ENCODE measurements at regions of chr12 and their contacts with region 1.

Region 1: DNA sequence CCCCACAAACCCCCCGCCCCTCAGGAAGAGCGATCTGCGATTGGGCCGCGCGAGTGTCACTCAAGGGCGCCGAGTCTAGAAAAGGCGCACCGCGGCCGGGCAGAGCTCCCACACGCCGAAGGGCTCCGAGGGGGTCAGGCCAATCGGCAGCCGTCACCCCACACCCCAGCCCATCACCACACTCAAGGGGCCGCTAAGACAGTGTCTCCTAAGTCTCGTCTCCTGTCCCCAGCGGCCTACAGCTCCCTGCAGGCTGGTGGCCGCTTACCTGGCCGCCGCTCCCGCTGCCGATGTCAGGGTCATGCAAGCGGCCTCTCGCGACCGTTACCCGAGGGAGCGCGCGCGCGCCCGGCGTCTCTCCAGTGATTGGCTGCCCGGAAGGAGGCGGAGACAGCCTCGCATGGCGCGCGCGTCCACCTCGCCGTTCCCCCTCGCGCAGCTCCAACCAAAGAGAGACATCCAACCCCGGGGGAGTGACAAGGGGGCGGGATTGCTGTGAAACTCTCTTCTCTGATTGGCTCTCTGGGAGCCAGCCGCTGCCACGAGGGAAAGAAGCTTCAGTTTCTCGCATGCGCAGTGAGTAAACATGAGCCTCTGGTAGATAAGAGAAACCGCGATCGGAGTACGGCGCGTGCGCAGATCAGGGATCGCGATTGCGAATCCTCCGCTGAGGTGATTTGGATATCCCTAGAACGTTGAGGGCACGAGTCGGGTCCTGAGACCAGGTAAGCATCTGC is at the starts of genes MPHOSPH9 and MTRFR:
- DNase-seq: peak; percentile 94 to 100 (median 100)
- ATAC-seq: peak; percentile 97
- H3K4me3 ChIP-seq: peak within 1 kb of the TSS; percentile 97
- H3K4me3 Mint-ChIP-seq: peak within 1 kb of the TSS; percentile 93 to 100 (median 98)
- H3K27ac ChIP-seq: peak within 1 kb of the TSS; percentile 95
- H3K27ac Mint-ChIP-seq: peak within 1 kb of the TSS; percentile 96 to 99 (median 99)
- H3K4me1 ChIP-seq: peaks cover 31 to 41% of the 10 kb centered on the region in 2 donors
- H3K4me1 Mint-ChIP-seq: peaks cover 43 to 88% (median 65%) of the 10 kb centered on the region in 7 donors
- H3K27me3 ChIP-seq: no peaks in the 10 kb centered on the region
- H3K27me3 Mint-ChIP-seq: peaks cover 0 to 4% (median 0%) of the 10 kb centered on the region in 5 donors
- total RNA-seq, gene MPHOSPH9: 71.0 to 102 (median 82.4) TPM
- total RNA-seq, gene MTRFR: 26.8 to 56.9 (median 39.5) TPM

Region 2: GRCh38 chr12:122752464-122753318 is 480.3 kb before region 1 on chr12 and contains the start of gene DENR:
- CTCF ChIA-PET with region 1: no interaction called
- POLR2A ChIA-PET with region 1: no interaction called
- intact Hi-C with region 1: loop called in 1 of 2 experiments (anchors 1 kb)
- DNase-seq: peak; percentile 98 to 100 (median 99)
- ATAC-seq: peak; percentile 99
- H3K4me3 ChIP-seq: peak within 1 kb of the TSS; percentile 87
- H3K4me3 Mint-ChIP-seq: peak within 1 kb of the TSS; percentile 93 to 100 (median 96)
- H3K27ac ChIP-seq: peak within 1 kb of the TSS; percentile 94
- H3K27ac Mint-ChIP-seq: peak within 1 kb of the TSS; percentile 89 to 98 (median 96)
- H3K4me1 ChIP-seq: peaks cover 12 to 19% of the 10 kb centered on the region in 2 donors
- H3K4me1 Mint-ChIP-seq: peaks cover 31 to 70% (median 60%) of the 10 kb centered on the region in 7 donors
- H3K27me3 ChIP-seq: no peaks in the 10 kb centered on the region
- H3K27me3 Mint-ChIP-seq: no peaks in the 10 kb centered on the region
- total RNA-seq, gene DENR: 29.5 to 65.5 (median 46.1) TPM

Region 3: DNA sequence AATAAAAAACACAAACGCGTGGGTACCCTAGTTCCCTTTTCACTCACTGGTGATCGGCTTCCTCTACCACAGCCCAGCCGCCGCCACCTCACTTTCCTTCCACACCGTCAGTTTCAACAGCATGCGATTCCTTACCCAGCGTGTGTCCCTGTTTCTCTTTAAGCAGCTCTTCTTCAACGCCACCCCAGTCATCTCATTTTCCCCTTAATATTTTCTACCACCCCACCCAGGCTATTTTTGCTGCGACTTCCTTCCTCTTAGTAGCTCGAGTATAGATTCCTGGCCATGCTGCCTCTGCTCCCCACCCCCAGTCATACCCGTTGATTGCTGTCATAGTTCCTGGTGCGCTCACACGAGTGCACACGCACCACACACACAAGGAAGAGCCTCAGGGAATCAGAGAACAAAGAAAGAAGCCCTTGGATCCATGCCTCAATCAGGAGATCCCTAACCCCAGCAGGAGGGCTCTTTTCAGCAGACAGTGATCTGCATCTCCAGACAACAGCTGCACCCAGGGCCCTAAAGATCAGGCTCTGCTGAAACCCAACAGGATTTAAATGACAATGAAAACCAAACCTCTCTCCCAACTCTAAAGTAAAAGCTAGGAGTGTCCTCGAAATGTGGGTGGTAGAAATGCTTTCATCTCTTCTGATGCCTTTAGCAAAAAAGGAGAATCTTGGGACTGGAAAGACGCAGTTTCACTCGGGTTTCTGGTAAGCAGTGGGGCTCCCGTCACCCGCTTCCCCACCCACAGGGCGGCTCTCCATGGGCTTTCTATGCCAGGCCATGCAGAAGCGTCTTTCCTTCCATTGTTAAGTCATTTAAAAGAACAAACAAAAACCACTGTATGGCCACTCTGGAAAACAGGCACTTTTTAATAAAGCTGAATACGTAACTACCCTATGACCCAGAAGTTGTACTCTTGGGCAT is 360.9 kb before region 1 on chr12:
- CTCF ChIA-PET with region 1: no interaction called
- POLR2A ChIA-PET with region 1: interaction called, 10 read pairs
- intact Hi-C with region 1: no loop called
- DNase-seq: peak in 5 of 9 donors; percentile 40 to 71 (median 43)
- ATAC-seq: peak; percentile 61
- H3K4me3 ChIP-seq: peak overlapping the region; percentile 50
- H3K4me3 Mint-ChIP-seq: peak overlapping the region; percentile 82 to 96 (median 89)
- H3K27ac ChIP-seq: peak overlapping the region; percentile 64
- H3K27ac Mint-ChIP-seq: peak overlapping the region; percentile 78 to 97 (median 87)
- H3K4me1 ChIP-seq: peaks cover 31 to 51% of the 10 kb centered on the region in 2 donors
- H3K4me1 Mint-ChIP-seq: peaks cover 47 to 82% (median 68%) of the 10 kb centered on the region in 7 donors
- H3K27me3 ChIP-seq: no peaks in the 10 kb centered on the region
- H3K27me3 Mint-ChIP-seq: peaks cover 0 to 9% (median 0%) of the 10 kb centered on the region in 5 donors

Region 4: GRCh38 chr12:122974274-122974891 is 258.6 kb before region 1 on chr12:
- CTCF ChIA-PET with region 1: no interaction called
- POLR2A ChIA-PET with region 1: interaction called, 34 read pairs
- intact Hi-C with region 1: loop called (anchors 1 kb)
- DNase-seq: peak; percentile 92 to 98 (median 98)
- ATAC-seq: peak; percentile 92
- H3K4me3 ChIP-seq: peak overlapping the region; percentile 100
- H3K4me3 Mint-ChIP-seq: peak overlapping the region; percentile 92 to 99 (median 97)
- H3K27ac ChIP-seq: peak overlapping the region; percentile 98
- H3K27ac Mint-ChIP-seq: peak overlapping the region; percentile 99 to 100 (median 99)
- H3K4me1 ChIP-seq: peaks cover 18 to 23% of the 10 kb centered on the region in 2 donors
- H3K4me1 Mint-ChIP-seq: peaks cover 17 to 39% (median 30%) of the 10 kb centered on the region in 7 donors
- H3K27me3 ChIP-seq: no peaks in the 10 kb centered on the region
- H3K27me3 Mint-ChIP-seq: peaks cover 0 to 3% (median 0%) of the 10 kb centered on the region in 5 donors

Region 5: GRCh38 chr12:123115409-123116121 is 117.4 kb before region 1 on chr12:
- CTCF ChIA-PET with region 1: interaction called, 4 read pairs
- POLR2A ChIA-PET with region 1: interaction called, 58 read pairs
- intact Hi-C with region 1: no loop called
- DNase-seq: peak in 7 of 9 donors; percentile 54 to 79 (median 70)
- ATAC-seq: peak; percentile 78
- H3K4me3 ChIP-seq: no peak overlapping the region
- H3K4me3 Mint-ChIP-seq: peak overlapping the region; percentile 38 to 81 (median 74)
- H3K27ac ChIP-seq: peak overlapping the region; percentile 69
- H3K27ac Mint-ChIP-seq: peak overlapping the region; percentile 41 to 100 (median 95)
- H3K4me1 ChIP-seq: peaks cover 3 to 59% of the 10 kb centered on the region in 2 donors
- H3K4me1 Mint-ChIP-seq: peaks cover 40 to 92% (median 85%) of the 10 kb centered on the region in 7 donors
- H3K27me3 ChIP-seq: no peaks in the 10 kb centered on the region
- H3K27me3 Mint-ChIP-seq: no peaks in the 10 kb centered on the region

Region 6: GRCh38 chr12:123250484-123251383 is 17.8 kb after region 1 on chr12:
- CTCF ChIA-PET with region 1: interaction called, 7 read pairs
- POLR2A ChIA-PET with region 1: interaction called, 10 read pairs
- intact Hi-C with region 1: no loop called
- DNase-seq: no peak
- ATAC-seq: no peak
- H3K4me3 ChIP-seq: no peak overlapping the region
- H3K4me3 Mint-ChIP-seq: peak overlapping the region in 9 of 10 donors; percentile 12 to 61 (median 27)
- H3K27ac ChIP-seq: peak overlapping the region; percentile 51
- H3K27ac Mint-ChIP-seq: peak overlapping the region; percentile 8 to 89 (median 62)
- H3K4me1 ChIP-seq: peaks cover 6 to 18% of the 10 kb centered on the region in 2 donors
- H3K4me1 Mint-ChIP-seq: peaks cover 29 to 64% (median 49%) of the 10 kb centered on the region in 7 donors
- H3K27me3 ChIP-seq: no peaks in the 10 kb centered on the region
- H3K27me3 Mint-ChIP-seq: no peaks in the 10 kb centered on the region

Region 7: DNA sequence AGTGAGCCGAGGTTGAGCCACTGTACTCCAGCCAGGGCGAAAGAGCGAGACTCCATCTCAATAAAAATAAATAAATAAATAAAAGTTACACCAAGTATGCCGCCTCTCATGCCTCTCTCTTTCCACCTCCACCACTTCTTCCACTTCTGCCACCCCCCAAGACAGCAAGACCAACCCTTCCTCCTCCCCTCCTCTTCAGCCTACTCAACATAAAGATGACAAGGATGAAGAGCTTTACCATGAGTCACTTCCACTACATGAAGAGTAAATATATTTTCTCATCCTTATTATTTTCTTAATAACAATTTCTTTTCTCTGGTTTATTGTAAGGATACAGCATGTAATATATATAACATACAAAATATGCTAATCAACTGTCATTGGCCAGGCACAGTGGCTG is 347.8 kb after region 1 on chr12:
- CTCF ChIA-PET with region 1: no interaction called
- POLR2A ChIA-PET with region 1: no interaction called
- intact Hi-C with region 1: loop called in 1 of 2 experiments (anchors 1 kb)
- DNase-seq: no peak
- ATAC-seq: no peak
- H3K4me3 ChIP-seq: no peak overlapping the region
- H3K4me3 Mint-ChIP-seq: no peak overlapping the region
- H3K27ac ChIP-seq: no peak overlapping the region
- H3K27ac Mint-ChIP-seq: peak overlapping the region in 4 of 9 donors; percentile 5 to 95 (median 44)
- H3K4me1 ChIP-seq: peaks cover 17 to 21% of the 10 kb centered on the region in 2 donors
- H3K4me1 Mint-ChIP-seq: peaks cover 20 to 30% (median 26%) of the 10 kb centered on the region in 7 donors
- H3K27me3 ChIP-seq: no peaks in the 10 kb centered on the region
- H3K27me3 Mint-ChIP-seq: no peaks in the 10 kb centered on the region